Transverse colon (tissue), 4 donors: ENCODE measurements at regions of chr5 and their contacts with region 1.

Region 1: DNA sequence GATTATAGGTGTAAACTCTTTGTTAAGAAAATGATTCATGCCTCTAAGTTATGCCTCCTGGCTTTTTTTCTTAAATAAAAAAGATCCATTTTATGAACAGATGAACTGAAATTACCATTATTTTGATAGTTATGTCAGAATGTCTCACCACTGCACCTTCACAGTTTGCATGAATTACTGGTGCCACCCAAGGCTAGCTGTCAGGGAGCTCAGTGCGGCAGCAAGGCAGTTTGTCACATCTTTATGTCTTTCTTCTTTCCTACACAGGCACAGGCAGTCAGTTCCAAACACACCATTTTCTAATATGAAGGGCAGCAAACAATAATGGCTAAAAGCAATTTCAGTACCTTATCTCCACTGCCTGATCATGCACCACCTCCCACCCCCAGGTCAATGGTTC is 147.7 kb downstream of the SREK1 start:
- DNase-seq: no peak
- H3K4me3 ChIP-seq: no peak overlapping the region
- H3K27ac ChIP-seq: no peak overlapping the region
- H3K4me1 ChIP-seq: no peaks in the 10 kb centered on the region
- H3K27me3 ChIP-seq: no peaks in the 10 kb centered on the region
- CTCF ChIP-seq: no peak
- EP300 ChIP-seq: no peak
- POLR2A ChIP-seq: no peak

Region 2: GRCh38 chr5:65382582-65382981 is 909.2 kb before region 1 on chr5:
- in situ Hi-C with region 1: no loop called
- intact Hi-C with region 1: no loop called
- DNase-seq: no peak
- H3K4me3 ChIP-seq: no peak overlapping the region
- H3K27ac ChIP-seq: no peak overlapping the region
- H3K4me1 ChIP-seq: no peaks in the 10 kb centered on the region
- H3K27me3 ChIP-seq: no peaks in the 10 kb centered on the region
- CTCF ChIP-seq: no peak
- EP300 ChIP-seq: no peak
- POLR2A ChIP-seq: no peak

Region 3: DNA sequence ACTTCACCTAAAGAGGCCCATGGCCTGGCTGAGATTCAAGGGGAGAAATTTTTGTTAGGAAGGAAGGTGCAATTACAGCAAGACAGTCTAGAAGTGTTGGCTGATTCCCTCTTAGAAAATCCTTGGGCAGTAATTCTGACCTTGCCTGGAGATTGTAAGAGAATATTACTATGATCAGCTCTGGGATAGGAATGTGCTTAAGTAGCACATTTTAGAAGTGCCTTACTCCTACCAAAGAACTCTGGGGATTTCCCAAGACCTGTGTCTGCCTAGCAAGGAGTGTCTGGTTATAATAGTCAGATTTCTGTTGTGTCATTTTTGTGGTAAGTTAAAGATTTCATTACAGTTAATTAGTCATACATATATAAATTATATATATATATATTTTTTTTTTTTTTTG is 517.4 kb before region 1 on chr5:
- in situ Hi-C with region 1: no loop called
- intact Hi-C with region 1: no loop called
- DNase-seq: no peak
- H3K4me3 ChIP-seq: no peak overlapping the region
- H3K27ac ChIP-seq: no peak overlapping the region
- H3K4me1 ChIP-seq: no peaks in the 10 kb centered on the region
- H3K27me3 ChIP-seq: no peaks in the 10 kb centered on the region
- CTCF ChIP-seq: no peak
- EP300 ChIP-seq: no peak
- POLR2A ChIP-seq: no peak

Region 4: DNA sequence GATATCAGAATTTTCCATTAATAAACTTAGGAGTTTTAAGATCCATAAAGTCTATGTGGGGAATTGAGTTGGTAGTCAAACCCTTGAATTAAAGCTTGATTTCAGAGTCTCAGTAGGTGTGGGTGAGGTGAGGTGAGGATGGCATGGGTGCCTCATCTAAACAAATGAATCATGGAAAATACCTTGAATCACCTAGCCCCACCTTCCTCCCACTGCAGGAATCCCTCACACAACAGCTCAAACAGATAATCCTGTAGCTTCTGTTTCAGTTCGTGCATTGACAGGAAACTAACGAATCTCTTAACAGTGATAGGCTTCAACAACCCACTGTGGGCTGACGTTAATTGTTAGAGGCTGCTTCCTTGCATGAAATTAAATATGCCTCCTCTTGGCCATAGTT is 37.3 kb after region 1 on chr5:
- in situ Hi-C with region 1: no loop called
- intact Hi-C with region 1: loop called (anchors 1 kb)
- DNase-seq: no peak
- H3K4me3 ChIP-seq: no peak overlapping the region
- H3K27ac ChIP-seq: no peak overlapping the region
- H3K4me1 ChIP-seq: no peaks in the 10 kb centered on the region
- H3K27me3 ChIP-seq: no peaks in the 10 kb centered on the region
- CTCF ChIP-seq: no peak
- EP300 ChIP-seq: no peak
- POLR2A ChIP-seq: no peak

Region 5: GRCh38 chr5:67591491-67591890 is 1299.7 kb after region 1 on chr5:
- in situ Hi-C with region 1: no loop called
- intact Hi-C with region 1: no loop called
- DNase-seq: no peak
- H3K4me3 ChIP-seq: no peak overlapping the region
- H3K27ac ChIP-seq: no peak overlapping the region
- H3K4me1 ChIP-seq: no peaks in the 10 kb centered on the region
- H3K27me3 ChIP-seq: no peaks in the 10 kb centered on the region
- CTCF ChIP-seq: no peak
- EP300 ChIP-seq: no peak
- POLR2A ChIP-seq: no peak